Mammary epithelial cell (primary cell): ENCODE measurements at regions of chr15 and their contacts with region 1.

Region 1: DNA sequence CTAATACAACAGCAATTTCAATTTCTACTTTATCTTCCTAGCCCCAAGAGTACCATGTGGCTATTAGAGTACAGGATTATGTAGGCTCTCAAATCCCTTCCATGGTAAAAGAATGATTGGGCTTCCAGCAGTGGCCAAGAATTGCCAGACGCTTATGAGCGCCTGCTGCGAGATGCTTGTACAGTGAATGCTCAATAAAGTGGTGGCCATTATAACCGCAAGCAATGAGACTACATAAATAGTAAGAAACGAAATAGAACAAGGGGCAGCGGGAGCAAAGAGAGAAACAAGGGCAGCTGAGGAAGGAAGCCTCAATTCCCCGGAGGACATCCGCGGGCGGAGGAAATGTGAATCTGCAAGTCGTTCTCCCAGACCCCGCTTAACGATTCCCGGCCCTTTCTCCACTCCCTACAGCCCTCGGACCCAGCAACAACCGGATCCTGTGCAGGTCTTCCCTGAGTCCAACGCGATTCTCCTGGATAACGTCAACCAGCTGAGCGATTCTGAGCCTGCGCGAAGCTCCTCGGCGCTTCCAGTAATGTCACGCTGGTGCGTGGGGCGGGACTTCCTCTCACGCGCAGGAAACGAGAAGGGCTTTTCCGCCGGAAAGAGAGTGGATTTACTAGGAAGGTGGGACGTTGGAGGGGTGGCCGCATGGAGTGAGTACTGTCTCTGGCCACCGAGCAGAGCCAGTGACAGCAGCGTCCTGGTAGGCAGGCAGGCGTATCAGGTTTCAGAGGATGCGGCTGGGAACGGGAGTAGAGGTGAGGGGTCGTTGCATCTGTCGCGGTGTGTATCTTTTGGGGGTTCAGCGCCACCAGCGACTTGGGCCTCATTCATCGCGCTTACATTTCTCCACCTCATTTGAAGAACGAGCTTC is 40.5 kb upstream of the AP3B2 start:
- DNase-seq: peak; percentile 93
- H3K4me3 ChIP-seq: peak overlapping the region; percentile 67 to 99 (median 74)
- H3K27ac ChIP-seq: peak overlapping the region; percentile 64
- H3K4me1 ChIP-seq: peaks cover 15% of the 10 kb centered on the region
- H3K27me3 ChIP-seq: no peaks in the 10 kb centered on the region
- CTCF ChIP-seq: no peak

Region 2: DNA sequence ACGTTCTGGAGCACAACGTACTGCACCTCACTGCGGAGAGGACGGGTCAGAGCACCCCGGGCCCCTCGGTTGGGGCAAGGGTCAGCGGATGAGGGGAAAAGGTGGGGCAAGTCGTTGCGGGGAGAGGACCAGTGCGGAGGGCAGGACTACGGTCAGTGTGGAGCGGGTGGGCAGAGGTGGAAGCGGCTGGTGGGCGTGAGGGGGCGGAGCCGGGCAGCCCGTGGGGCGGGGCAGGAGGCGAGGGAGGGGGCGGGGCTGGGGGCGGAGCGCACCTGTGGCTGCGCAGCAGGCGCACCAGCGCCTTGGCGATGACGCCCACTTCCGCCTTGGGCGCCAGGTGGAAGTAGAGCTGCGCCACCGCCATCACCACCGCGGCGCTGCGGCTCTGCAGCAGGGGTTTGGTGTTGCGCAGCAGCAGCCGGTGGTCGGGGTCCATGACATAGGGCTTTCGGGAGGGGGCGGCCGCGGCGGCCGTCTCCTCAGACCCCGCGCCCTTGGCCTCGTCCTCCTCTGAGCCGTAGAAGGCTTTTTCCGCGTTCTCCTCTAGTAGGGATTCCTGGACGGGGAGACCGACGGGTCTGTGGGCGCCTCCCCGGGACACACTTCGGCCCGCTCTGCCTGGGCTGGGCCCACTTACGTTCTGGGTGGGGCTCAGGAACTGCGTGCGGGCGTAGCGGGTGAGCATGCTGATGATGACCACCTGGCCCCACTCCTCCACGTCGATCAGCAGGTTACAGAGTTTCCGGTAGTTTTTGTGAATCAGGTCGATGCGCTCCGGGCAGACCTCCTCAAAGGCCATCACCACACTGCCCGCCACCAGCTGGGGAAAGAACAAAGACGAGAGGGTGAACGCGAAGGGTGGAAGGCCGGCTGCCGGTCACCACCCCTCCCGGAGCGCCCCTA is 69.7 kb before region 1 on chr15:
- CTCF ChIA-PET with region 1: no interaction called
- dilution Hi-C with region 1: no loop called
- in situ Hi-C with region 1: no loop called
- intact Hi-C with region 1: loop called (anchors 1 kb)
- DNase-seq: peak; percentile 71
- H3K4me3 ChIP-seq: peak overlapping the region; percentile 67 to 80 (median 69)
- H3K27ac ChIP-seq: no peak overlapping the region
- H3K4me1 ChIP-seq: peaks cover 10% of the 10 kb centered on the region
- H3K27me3 ChIP-seq: no peaks in the 10 kb centered on the region
- CTCF ChIP-seq: peak in 1 of 2 donors; percentile 57

Region 3: DNA sequence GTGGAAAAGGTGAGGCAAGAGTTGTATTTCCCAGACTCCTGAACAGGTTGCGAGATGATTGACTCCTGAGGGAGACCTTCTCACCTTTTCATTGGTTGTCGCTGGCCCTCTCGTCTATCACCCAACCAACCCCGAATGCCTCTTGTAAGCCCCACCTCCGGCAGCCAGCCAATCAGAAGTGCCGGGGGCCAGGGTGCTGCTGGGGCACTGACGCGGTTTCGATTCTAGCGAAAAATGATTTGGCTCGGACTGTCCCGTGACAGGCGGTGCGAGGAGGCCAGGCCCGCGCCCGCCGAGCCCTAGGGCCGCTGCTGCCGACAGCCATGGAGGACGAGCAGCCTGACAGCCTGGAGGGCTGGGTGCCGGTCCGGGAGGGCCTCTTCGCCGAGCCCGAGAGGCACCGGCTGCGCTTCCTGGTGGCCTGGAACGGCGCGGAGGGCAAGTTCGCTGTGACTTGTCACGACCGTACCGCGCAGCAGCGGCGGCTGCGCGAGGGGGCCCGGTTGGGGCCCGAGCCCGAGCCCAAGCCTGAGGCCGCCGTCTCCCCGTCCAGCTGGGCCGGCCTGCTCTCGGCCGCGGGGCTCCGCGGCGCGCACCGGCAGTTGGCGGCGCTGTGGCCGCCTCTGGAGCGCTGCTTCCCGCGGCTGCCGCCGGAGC is 59.3 kb after region 1 on chr15 and contains the start of gene WHAMM:
- CTCF ChIA-PET with region 1: no interaction called
- dilution Hi-C with region 1: loop called (anchors 5 kb)
- in situ Hi-C with region 1: no loop called
- intact Hi-C with region 1: loop called (anchors 2 kb)
- DNase-seq: peak; percentile 99
- H3K4me3 ChIP-seq: peak within 1 kb of the TSS; percentile 92 to 97 (median 96)
- H3K27ac ChIP-seq: peak within 1 kb of the TSS; percentile 95
- H3K4me1 ChIP-seq: peaks cover 10% of the 10 kb centered on the region
- H3K27me3 ChIP-seq: no peaks in the 10 kb centered on the region
- CTCF ChIP-seq: no peak
- total RNA-seq, gene WHAMM: 7.3 to 8.6 TPM

Region 4: GRCh38 chr15:82849556-82850512 is 99.6 kb after region 1 on chr15:
- CTCF ChIA-PET with region 1: no interaction called
- dilution Hi-C with region 1: loop called (anchors 5 kb)
- in situ Hi-C with region 1: no loop called
- intact Hi-C with region 1: no loop called
- DNase-seq: peak; percentile 42
- H3K4me3 ChIP-seq: no peak overlapping the region
- H3K27ac ChIP-seq: no peak overlapping the region
- H3K4me1 ChIP-seq: peaks cover under 1% of the 10 kb centered on the region
- H3K27me3 ChIP-seq: no peaks in the 10 kb centered on the region
- CTCF ChIP-seq: peak; percentile 50 to 66

Region 5: GRCh38 chr15:82894971-82895520 is 144.9 kb after region 1 on chr15:
- CTCF ChIA-PET with region 1: no interaction called
- dilution Hi-C with region 1: no loop called
- in situ Hi-C with region 1: no loop called
- intact Hi-C with region 1: no loop called
- DNase-seq: no peak
- H3K4me3 ChIP-seq: no peak overlapping the region
- H3K27ac ChIP-seq: no peak overlapping the region
- H3K4me1 ChIP-seq: no peaks in the 10 kb centered on the region
- H3K27me3 ChIP-seq: no peaks in the 10 kb centered on the region
- CTCF ChIP-seq: no peak

Region 6: DNA sequence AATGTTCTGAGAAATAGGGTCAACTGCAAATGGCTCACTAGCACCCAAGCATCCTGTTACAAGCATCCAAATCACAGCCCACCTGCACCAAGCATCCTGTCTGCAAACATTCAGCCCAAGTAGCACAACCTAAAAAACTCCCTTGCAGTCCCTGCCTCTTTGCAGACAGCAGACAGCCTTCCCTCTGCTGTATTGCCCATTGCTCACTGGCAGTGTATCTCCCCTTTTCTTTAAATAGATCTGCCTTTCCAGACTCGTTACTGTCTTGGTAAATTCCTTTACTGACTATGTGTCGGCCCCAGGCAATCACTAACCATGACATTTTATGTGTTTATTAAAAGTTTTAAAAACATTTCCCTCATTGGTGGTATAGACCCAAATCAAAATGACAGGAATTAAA is 1059.2 kb after region 1 on chr15:
- CTCF ChIA-PET with region 1: no interaction called
- dilution Hi-C with region 1: no loop called
- in situ Hi-C with region 1: no loop called
- intact Hi-C with region 1: no loop called
- DNase-seq: peak; percentile 50
- H3K4me3 ChIP-seq: no peak overlapping the region
- H3K27ac ChIP-seq: no peak overlapping the region
- H3K4me1 ChIP-seq: peaks cover 7% of the 10 kb centered on the region
- H3K27me3 ChIP-seq: no peaks in the 10 kb centered on the region
- CTCF ChIP-seq: no peak